Activated B cell treated with CpG ODN at 0.5 μM for 24 hours (primary cell): ENCODE measurements at regions of chr2 and their contacts with region 1.

Region 1: DNA sequence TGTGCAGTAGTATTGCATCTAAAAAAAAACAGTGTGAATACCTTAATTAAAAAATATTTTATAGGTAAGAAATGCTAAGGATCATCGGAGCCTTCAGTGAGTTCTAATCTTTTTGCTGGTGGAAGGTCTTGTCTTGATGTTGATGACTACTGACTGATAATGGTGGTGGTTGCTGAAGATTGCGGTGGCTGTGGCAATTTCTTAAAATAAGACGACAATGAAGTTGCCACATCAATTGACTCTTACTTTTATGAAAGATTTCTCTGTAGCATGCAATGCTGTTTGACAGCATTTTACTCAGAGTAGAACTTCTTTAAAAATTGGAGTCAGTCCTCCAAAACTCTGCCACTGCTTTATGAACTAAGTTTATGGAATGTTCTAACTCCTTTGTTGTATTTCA is 36.2 kb downstream of the GLS start:
- DNase-seq: no peak
- ATAC-seq: no peak
- H3K4me3 Mint-ChIP-seq: no peak overlapping the region
- H3K27ac Mint-ChIP-seq: no peak overlapping the region
- H3K4me1 Mint-ChIP-seq: peaks cover 2% of the 10 kb centered on the region
- H3K27me3 Mint-ChIP-seq: no peaks in the 10 kb centered on the region
- CTCF ChIP-seq: no peak

Region 2: GRCh38 chr2:190904640-190905261 is 12.1 kb before region 1 on chr2:
- CTCF ChIA-PET with region 1: no interaction called
- POLR2A ChIA-PET with region 1: no interaction called
- intact Hi-C with region 1: loop called (anchors 1 kb)
- DNase-seq: no peak
- ATAC-seq: no peak
- H3K4me3 Mint-ChIP-seq: no peak overlapping the region
- H3K27ac Mint-ChIP-seq: no peak overlapping the region
- H3K4me1 Mint-ChIP-seq: no peaks in the 10 kb centered on the region
- H3K27me3 Mint-ChIP-seq: no peaks in the 10 kb centered on the region
- CTCF ChIP-seq: no peak

Region 3: DNA sequence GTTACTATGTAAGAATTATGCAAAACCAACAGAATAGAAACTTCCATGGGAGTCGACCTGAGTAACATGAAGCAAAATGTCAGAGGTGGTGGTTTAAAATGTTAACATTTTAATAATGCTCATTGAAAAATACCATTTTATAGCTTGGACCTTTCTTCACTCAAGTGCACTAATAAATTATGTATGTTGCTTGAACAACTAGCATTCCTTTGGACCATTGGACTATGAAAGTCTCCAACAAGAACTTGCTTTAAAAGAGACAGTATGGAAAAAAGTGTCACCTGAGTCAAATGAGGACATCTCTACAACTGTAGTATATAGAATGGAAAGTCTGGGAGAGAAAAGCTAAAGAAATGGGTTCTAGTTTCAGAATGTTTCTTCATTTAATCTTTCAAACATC is 15.7 kb after region 1 on chr2:
- CTCF ChIA-PET with region 1: no interaction called
- POLR2A ChIA-PET with region 1: no interaction called
- intact Hi-C with region 1: loop called (anchors 2 kb)
- DNase-seq: no peak
- ATAC-seq: no peak
- H3K4me3 Mint-ChIP-seq: no peak overlapping the region
- H3K27ac Mint-ChIP-seq: no peak overlapping the region
- H3K4me1 Mint-ChIP-seq: peaks cover 2% of the 10 kb centered on the region
- H3K27me3 Mint-ChIP-seq: no peaks in the 10 kb centered on the region
- CTCF ChIP-seq: no peak

Region 4: DNA sequence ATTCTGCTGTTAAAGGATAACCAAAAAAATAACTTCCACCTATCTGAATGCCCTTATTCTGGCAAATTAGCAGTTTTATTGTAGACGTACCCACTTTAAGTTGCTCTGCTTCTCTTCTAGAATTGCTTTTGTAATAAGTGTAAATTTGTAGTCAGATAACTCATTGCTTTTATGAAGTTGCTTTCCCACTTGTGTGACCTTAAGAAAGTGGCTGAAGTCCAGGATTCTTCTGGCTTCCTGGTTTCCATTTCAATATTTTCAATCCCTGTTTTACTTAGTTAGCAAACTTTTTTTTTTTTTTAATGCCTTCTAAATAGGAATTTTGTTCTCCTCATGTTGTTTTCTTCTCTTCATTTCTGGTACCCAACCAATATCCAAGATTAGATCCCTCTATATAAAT is 23.6 kb after region 1 on chr2:
- CTCF ChIA-PET with region 1: no interaction called
- POLR2A ChIA-PET with region 1: no interaction called
- intact Hi-C with region 1: loop called (anchors 2 kb)
- DNase-seq: no peak
- ATAC-seq: no peak
- H3K4me3 Mint-ChIP-seq: no peak overlapping the region
- H3K27ac Mint-ChIP-seq: no peak overlapping the region
- H3K4me1 Mint-ChIP-seq: peaks cover 7% of the 10 kb centered on the region
- H3K27me3 Mint-ChIP-seq: no peaks in the 10 kb centered on the region
- CTCF ChIP-seq: no peak

Region 5: GRCh38 chr2:190996338-190996946 is 79.6 kb after region 1 on chr2:
- CTCF ChIA-PET with region 1: no interaction called
- POLR2A ChIA-PET with region 1: no interaction called
- intact Hi-C with region 1: loop called (anchors 5 kb)
- DNase-seq: no peak
- ATAC-seq: peak; percentile 82
- H3K4me3 Mint-ChIP-seq: no peak overlapping the region
- H3K27ac Mint-ChIP-seq: no peak overlapping the region
- H3K4me1 Mint-ChIP-seq: peaks cover 6% of the 10 kb centered on the region
- H3K27me3 Mint-ChIP-seq: no peaks in the 10 kb centered on the region
- CTCF ChIP-seq: peak; percentile 19